B cell (primary cell): ENCODE measurements at regions of chr9 and their contacts with region 1.

Region 1: DNA sequence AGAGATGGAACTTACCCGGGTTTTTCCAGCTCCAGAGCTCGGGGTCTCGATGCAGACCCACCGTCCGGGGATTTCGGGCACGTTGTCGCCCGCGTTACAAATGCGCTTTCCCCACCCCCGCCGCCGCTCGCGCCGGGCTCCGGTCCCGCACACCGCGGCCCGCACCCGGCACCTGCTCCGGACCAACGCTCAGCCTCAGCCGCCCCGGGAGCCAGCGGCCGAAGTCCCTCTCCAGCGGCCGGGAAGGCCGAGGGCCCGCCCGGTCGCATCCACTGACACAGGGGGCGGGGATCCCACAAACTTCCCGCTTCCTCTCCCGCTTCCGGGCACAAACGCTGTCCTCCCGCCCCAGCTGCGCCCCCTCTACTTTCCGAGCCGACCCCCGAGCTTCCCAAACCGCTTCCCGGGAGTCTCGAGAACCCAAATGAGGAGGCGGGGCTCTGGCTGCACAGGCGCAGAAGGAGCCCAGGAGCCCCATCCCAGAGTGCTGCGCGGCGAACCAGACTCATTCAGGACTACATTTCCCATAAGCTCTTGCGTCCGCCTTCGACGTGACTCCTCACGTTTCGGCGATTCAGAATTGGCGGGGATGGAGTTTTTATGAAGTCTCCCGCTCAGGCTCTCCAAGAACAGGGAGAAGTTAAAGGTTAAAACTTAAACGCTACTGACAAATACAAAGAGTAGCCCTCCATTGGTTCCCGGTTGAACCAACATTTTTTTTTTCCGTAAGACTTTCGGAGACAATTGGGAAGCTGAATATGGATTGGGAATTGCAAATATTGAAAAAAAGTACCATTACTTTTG is at the start of gene ZNF782:
- DNase-seq: peak; percentile 89
- ATAC-seq: peak; percentile 93
- H3K4me3 ChIP-seq: peak within 1 kb of the TSS; percentile 84 to 100 (median 89)
- H3K4me3 Mint-ChIP-seq: peak within 1 kb of the TSS; percentile 98
- H3K27ac ChIP-seq: peak within 1 kb of the TSS; percentile 56 to 82
- H3K27ac Mint-ChIP-seq: peak within 1 kb of the TSS; percentile 97
- H3K4me1 ChIP-seq: peaks cover 12 to 18% of the 10 kb centered on the region in 2 donors
- H3K4me1 Mint-ChIP-seq: peaks cover 39% of the 10 kb centered on the region
- H3K27me3 ChIP-seq: peaks cover 0 to 7% (median 0%) of the 10 kb centered on the region in 4 experiments
- H3K27me3 Mint-ChIP-seq: peaks cover 5% of the 10 kb centered on the region
- CTCF ChIP-seq: no peak
- total RNA-seq, gene ZNF782: 14.6 and 16.3 TPM in 2 replicates

Region 2: GRCh38 chr9:96449845-96450612 is 404.2 kb before region 1 on chr9 and contains the start of gene HABP4:
- CTCF ChIA-PET with region 1: no interaction called
- POLR2A ChIA-PET with region 1: no interaction called
- intact Hi-C with region 1: loop called (anchors 10 kb)
- DNase-seq: peak; percentile 96
- ATAC-seq: peak; percentile 95
- H3K4me3 ChIP-seq: peak within 1 kb of the TSS; percentile 59 to 74 (median 65)
- H3K4me3 Mint-ChIP-seq: peak within 1 kb of the TSS; percentile 94
- H3K27ac ChIP-seq: no peak within 1 kb of the TSS
- H3K27ac Mint-ChIP-seq: peak within 1 kb of the TSS; percentile 83
- H3K4me1 ChIP-seq: peaks cover 12 to 13% of the 10 kb centered on the region in 2 donors
- H3K4me1 Mint-ChIP-seq: peaks cover 14% of the 10 kb centered on the region
- H3K27me3 ChIP-seq: peaks cover 0 to 8% (median 0%) of the 10 kb centered on the region in 4 experiments
- H3K27me3 Mint-ChIP-seq: peaks cover 7% of the 10 kb centered on the region
- CTCF ChIP-seq: no peak
- total RNA-seq, gene HABP4: 14.1 and 15.0 TPM in 2 replicates

Region 3: DNA sequence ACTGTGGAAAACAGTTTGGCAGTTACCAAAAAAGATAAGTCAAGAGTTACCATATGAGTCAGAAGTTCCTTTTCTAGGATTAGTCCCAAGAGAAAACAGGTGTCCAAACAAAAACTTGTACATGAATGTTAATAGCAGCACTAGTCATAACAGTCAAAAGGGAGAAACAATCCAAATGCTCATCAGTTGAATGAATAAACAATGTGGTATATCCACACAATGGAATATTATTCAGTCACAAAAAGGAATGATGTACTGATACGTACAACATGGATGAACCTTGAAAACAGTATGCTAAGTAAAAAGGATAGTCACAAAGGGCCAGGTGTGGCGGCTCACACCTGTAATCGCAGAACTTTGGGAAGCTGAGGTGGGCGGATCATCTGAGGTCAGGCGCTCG is 84.3 kb before region 1 on chr9:
- CTCF ChIA-PET with region 1: no interaction called
- POLR2A ChIA-PET with region 1: no interaction called
- intact Hi-C with region 1: no loop called
- DNase-seq: no peak
- ATAC-seq: no peak
- H3K4me3 ChIP-seq: no peak overlapping the region
- H3K4me3 Mint-ChIP-seq: no peak overlapping the region
- H3K27ac ChIP-seq: no peak overlapping the region
- H3K27ac Mint-ChIP-seq: no peak overlapping the region
- H3K4me1 ChIP-seq: peaks cover 0 to 5% of the 10 kb centered on the region in 2 donors
- H3K4me1 Mint-ChIP-seq: peaks cover 17% of the 10 kb centered on the region
- H3K27me3 ChIP-seq: no peaks in the 10 kb centered on the region
- H3K27me3 Mint-ChIP-seq: no peaks in the 10 kb centered on the region
- CTCF ChIP-seq: no peak

Region 4: DNA sequence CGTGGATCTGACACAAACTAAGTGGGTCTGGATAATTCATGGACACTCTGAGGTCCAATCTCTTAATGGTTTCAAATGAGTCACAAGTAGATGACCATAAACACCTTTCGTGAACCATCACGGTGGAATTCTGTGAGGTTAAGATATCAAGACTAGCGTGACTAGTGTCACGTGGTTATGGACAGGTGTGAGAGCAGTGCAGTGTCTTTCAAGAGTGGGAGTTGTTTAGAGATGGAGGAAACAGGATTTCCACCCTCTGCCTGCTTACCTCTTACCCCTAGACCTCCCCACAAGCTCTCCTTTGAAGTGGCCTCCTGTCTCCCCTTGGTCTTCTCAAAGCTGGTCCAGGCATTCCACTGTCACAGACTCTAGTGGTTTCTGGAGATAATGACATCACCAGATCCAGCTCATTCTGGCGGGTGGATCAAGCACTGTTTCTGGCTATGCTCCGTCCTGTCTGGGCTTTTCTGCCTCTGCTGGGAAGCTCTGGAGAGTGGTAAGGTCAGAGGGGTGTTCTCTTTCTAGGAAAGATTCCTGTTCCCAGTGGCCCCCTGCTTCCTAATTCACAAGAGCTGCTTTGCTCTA is 20.0 kb after region 1 on chr9:
- CTCF ChIA-PET with region 1: interaction called, 11 read pairs
- POLR2A ChIA-PET with region 1: no interaction called
- intact Hi-C with region 1: no loop called
- DNase-seq: no peak
- ATAC-seq: no peak
- H3K4me3 ChIP-seq: no peak overlapping the region
- H3K4me3 Mint-ChIP-seq: peak overlapping the region; percentile 27
- H3K27ac ChIP-seq: no peak overlapping the region
- H3K27ac Mint-ChIP-seq: no peak overlapping the region
- H3K4me1 ChIP-seq: peaks cover 25 to 27% of the 10 kb centered on the region in 2 donors
- H3K4me1 Mint-ChIP-seq: peaks cover 38% of the 10 kb centered on the region
- H3K27me3 ChIP-seq: peaks cover 0 to 42% (median 34%) of the 10 kb centered on the region in 4 experiments
- H3K27me3 Mint-ChIP-seq: peaks cover 40% of the 10 kb centered on the region
- CTCF ChIP-seq: no peak

Region 5: GRCh38 chr9:97386733-97387503 is 532.6 kb after region 1 on chr9:
- CTCF ChIA-PET with region 1: interaction called, 24 read pairs
- POLR2A ChIA-PET with region 1: no interaction called
- intact Hi-C with region 1: no loop called
- DNase-seq: peak; percentile 74
- ATAC-seq: peak; percentile 77
- H3K4me3 ChIP-seq: peak overlapping the region in 1 of 5 experiments; percentile 6
- H3K4me3 Mint-ChIP-seq: no peak overlapping the region
- H3K27ac ChIP-seq: no peak overlapping the region
- H3K27ac Mint-ChIP-seq: no peak overlapping the region
- H3K4me1 ChIP-seq: peaks cover 15% of the 10 kb centered on the region in 2 donors
- H3K4me1 Mint-ChIP-seq: peaks cover 18% of the 10 kb centered on the region
- H3K27me3 ChIP-seq: peaks cover 0 to 28% (median 0%) of the 10 kb centered on the region in 4 experiments
- H3K27me3 Mint-ChIP-seq: peaks cover 10% of the 10 kb centered on the region
- CTCF ChIP-seq: peak; percentile 99

Region 6: DNA sequence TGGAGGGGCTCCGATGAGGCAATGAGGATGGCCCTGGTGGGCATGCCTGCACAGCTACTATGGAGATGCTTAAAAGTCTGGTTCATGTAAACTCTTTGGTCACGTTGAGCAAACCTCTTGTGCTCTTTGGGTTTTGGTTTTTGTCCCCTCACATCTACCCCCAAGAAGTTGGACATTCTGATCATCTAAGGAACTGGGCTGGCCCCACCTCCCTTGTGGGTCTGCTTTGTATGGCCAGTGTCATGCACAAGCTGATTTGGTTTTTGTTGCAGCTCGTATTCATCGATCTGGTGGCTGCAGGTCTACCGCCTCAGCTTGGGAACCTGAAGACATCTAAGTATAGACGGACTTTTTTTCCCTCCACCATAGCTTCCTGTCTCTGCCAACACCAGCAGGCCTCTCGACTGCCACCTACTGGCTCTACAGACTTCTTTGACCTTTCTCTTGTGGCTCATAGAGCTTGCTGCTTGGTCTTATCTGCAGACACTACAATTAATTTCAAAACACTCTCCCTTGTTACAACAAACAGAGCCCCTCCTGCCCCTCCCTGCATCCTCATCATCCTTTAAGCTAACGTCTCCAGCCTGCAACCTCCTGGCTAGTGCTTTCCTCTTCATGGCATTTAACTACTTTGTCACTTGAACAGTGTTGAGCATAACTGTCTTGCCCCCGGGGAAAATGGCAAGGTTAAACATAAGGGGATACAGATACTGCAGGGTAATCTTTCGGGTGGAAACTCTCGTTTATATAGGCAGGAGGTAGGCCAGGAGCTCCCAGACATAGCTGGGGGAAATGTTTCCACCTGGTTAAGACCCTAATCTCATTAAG is 744.4 kb after region 1 on chr9:
- CTCF ChIA-PET with region 1: interaction called, 56 read pairs
- POLR2A ChIA-PET with region 1: no interaction called
- intact Hi-C with region 1: loop called (anchors 1 kb)
- DNase-seq: peak; percentile 77
- ATAC-seq: peak; percentile 85
- H3K4me3 ChIP-seq: peak overlapping the region in 1 of 5 experiments; percentile 23
- H3K4me3 Mint-ChIP-seq: peak overlapping the region; percentile 51
- H3K27ac ChIP-seq: no peak overlapping the region
- H3K27ac Mint-ChIP-seq: no peak overlapping the region
- H3K4me1 ChIP-seq: peaks cover 0 to 4% of the 10 kb centered on the region in 2 donors
- H3K4me1 Mint-ChIP-seq: peaks cover 6% of the 10 kb centered on the region
- H3K27me3 ChIP-seq: no peaks in the 10 kb centered on the region
- H3K27me3 Mint-ChIP-seq: no peaks in the 10 kb centered on the region
- CTCF ChIP-seq: peak; percentile 87